ENCODE measurements at regions of chr15 and their contacts with region 1.

Region 1: DNA sequence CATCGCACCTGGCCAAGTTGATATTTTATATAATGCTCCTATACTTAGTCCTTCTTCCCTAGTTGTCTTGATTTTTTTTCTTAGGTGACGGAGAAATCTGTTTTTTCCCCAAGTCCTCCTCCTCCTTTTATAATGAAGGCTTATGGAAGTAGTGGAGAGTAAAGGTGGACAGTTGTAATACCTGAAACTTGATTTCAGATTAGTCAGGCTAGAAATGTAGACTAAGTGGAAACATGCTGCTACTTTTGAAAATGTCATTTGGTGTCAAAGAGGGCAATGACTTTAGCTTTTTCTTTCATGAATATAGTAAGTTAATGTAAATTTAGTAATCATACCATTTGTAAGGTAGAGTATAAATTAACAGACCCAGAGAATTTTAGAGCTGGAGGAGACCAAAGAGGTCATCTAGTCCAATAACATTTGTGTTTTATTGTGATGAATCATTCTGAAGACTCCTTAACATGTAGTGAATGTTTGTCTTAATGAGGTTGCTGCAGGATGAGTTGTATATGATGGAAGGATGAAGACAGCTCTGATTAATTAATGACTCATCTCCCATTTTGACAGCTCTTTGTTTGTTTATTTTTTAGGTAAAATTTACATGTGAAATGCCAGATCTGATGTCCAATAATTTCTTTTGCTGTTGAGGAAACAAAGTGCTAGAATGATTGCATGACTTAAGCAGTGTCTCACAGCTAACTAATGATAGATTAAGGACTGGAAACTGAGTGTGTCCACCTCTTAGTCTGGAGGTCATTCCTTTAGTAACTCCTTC is 8.7 kb downstream of the CTDSPL2 start:
- DNase-seq: no peak
- H3K4me3 Mint-ChIP-seq: no peak overlapping the region
- H3K27ac Mint-ChIP-seq: peak overlapping the region; percentile 50
- H3K4me1 Mint-ChIP-seq: peaks cover 46% of the 10 kb centered on the region
- H3K27me3 Mint-ChIP-seq: no peaks in the 10 kb centered on the region

Region 2: DNA sequence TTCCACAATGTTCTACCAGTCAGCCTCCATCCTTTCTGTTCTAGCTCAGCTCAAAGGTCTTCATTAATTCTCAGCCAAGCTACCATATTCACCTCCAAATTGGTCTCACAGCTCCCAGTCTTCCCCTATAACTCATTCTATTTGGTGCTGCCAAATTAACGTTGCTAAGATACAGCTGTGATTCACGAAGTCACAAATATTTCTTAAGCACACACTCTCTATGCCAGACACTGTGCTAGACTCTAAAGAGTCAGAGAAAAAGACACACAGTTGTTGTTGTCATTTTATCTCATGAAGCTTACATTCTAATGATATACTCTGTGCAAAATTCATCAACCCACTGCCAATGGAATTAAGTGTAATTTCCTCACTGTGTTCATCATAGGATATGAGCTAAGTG is 343.9 kb before region 1 on chr15:
- CTCF ChIA-PET with region 1: no interaction called
- intact Hi-C with region 1: no loop called
- DNase-seq: no peak
- H3K4me3 Mint-ChIP-seq: no peak overlapping the region
- H3K27ac Mint-ChIP-seq: no peak overlapping the region
- H3K4me1 Mint-ChIP-seq: no peaks in the 10 kb centered on the region
- H3K27me3 Mint-ChIP-seq: no peaks in the 10 kb centered on the region

Region 3: GRCh38 chr15:44450172-44450571 is 14.1 kb after region 1 on chr15:
- CTCF ChIA-PET with region 1: no interaction called
- intact Hi-C with region 1: loop called (anchors 2 kb)
- DNase-seq: no peak
- H3K4me3 Mint-ChIP-seq: no peak overlapping the region
- H3K27ac Mint-ChIP-seq: no peak overlapping the region
- H3K4me1 Mint-ChIP-seq: peaks cover 49% of the 10 kb centered on the region
- H3K27me3 Mint-ChIP-seq: no peaks in the 10 kb centered on the region